ENCODE measurements at regions of chr11 and their contacts with region 1.

Region 1: GRCh38 chr11:130314750-130315285 is at the start of gene ZBTB44:
- DNase-seq: peak; percentile 93 to 94
- ATAC-seq: peak; percentile 97 to 98 (median 98)
- H3K4me3 ChIP-seq: peak within 1 kb of the TSS; percentile 65 to 98 (median 89)
- H3K27ac ChIP-seq: peak within 1 kb of the TSS; percentile 87 to 95 (median 92)
- H3K4me1 ChIP-seq: peaks cover 0 to 47% (median 36%) of the 10 kb centered on the region in 9 donors
- H3K27me3 ChIP-seq: no peaks in the 10 kb centered on the region
- CTCF ChIP-seq: no peak
- total RNA-seq, gene ZBTB44: 36.5 to 51.6 (median 39.6) TPM

Region 2: GRCh38 chr11:130269326-130269943 is 45.4 kb before region 1 on chr11:
- intact Hi-C with region 1: no loop called
- DNase-seq: no peak
- ATAC-seq: no peak
- H3K4me3 ChIP-seq: no peak overlapping the region
- H3K27ac ChIP-seq: no peak overlapping the region
- H3K4me1 ChIP-seq: peaks cover 0 to 9% (median 0%) of the 10 kb centered on the region in 9 donors
- H3K27me3 ChIP-seq: no peaks in the 10 kb centered on the region
- CTCF ChIP-seq: no peak

Region 3: DNA sequence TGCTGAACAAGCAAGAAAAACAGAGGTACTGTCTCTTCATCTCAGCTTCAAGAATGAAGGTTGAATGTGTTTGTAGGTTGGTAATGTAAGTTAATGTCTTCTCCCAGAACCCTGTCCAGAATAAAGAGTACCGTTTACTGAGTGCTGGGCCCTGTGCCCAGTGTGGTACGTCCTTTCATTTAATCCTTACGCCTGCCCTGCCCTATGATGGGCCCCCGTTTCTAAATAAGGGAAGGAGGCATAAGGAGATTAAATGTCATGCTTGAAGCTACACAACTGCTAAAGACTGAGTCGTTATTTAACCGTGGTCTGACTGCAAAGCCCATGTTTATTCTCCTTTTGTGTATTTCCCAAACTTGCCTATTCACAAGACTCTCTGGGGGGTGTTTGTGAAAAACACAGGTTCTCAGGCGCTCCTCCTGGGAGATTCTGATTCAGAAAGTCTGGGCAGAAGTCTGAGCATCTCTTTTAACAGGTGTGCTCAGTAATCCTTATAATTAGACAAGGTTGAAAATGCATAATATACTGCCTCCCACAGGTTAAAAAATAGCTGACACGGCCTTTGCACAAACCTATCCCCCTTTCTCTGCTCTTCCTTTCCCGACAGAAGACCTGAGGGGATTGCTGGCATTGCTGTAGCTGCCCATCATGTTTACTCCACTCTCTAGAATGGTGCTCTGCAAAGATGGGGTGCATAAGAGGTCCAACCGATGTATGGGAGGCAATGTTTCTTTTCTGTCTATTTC is 56.2 kb after region 1 on chr11:
- intact Hi-C with region 1: no loop called
- DNase-seq: no peak
- ATAC-seq: no peak
- H3K4me3 ChIP-seq: no peak overlapping the region
- H3K27ac ChIP-seq: no peak overlapping the region
- H3K4me1 ChIP-seq: no peaks in the 10 kb centered on the region
- H3K27me3 ChIP-seq: no peaks in the 10 kb centered on the region
- CTCF ChIP-seq: no peak

Region 4: DNA sequence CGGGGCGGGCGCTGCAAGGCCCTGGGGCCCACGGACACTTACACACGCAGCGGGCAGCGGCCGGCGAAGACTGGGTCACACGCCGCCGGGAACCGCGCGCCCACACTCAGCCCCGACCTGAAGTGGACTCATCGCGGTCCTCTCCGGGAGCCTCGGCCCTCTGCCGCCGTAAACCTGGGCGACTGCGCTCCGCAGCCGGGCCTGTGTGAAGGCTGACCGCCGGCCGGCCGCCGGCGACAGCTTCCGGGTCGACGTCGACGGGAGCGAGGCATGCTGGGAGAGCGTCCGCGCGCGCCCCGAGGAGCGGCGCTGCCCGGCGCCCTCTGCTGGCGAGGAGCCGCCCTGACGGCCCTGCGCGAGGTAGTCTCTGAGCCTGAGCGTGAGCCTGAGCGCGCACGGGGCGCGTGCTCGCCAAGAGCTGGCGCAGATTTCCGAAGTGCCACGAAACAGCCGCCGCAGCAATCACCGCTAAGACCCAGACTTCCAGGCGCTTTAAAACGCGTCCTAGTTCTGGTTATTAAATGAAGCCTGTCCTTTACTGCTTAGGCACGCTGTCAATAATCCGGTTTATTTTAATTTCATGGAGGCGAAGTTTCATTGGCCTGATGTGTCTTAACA is 601.5 kb after region 1 on chr11 and contains the start of gene SNX19:
- intact Hi-C with region 1: loop called in 1 of 10 experiments (anchors 10 kb)
- DNase-seq: peak; percentile 91 to 95
- ATAC-seq: peak; percentile 99 to 100 (median 99)
- H3K4me3 ChIP-seq: peak within 1 kb of the TSS; percentile 82 to 100 (median 92)
- H3K27ac ChIP-seq: peak within 1 kb of the TSS; percentile 68 to 96 (median 87)
- H3K4me1 ChIP-seq: peaks cover 5 to 43% (median 36%) of the 10 kb centered on the region in 9 donors
- H3K27me3 ChIP-seq: no peaks in the 10 kb centered on the region
- CTCF ChIP-seq: peak; percentile 94 to 99 (median 98)
- total RNA-seq, gene SNX19: 37.1 to 60.9 (median 54.5) TPM